K562 (cell line): ENCODE measurements at regions of chr14 and their contacts with region 1.

Region 1: GRCh38 chr14:94548999-94549985 is 11.9 kb upstream of the SERPINA4 start:
- DNase-seq: peak; percentile 41 to 65 (median 55)
- ATAC-seq: peak; percentile 88
- H3K4me3 ChIP-seq: no peak overlapping the region
- H3K27ac ChIP-seq: no peak overlapping the region
- H3K4me1 ChIP-seq: no peaks in the 10 kb centered on the region
- H3K27me3 ChIP-seq: no peaks in the 10 kb centered on the region
- CTCF ChIP-seq: peak; percentile 62 to 68 (median 65)
- EP300 ChIP-seq: no peak
- POLR2A ChIP-seq: no peak
- RAD21 ChIP-seq: peak in 1 of 2 experiments; percentile 48; a peak in 2 of 4 replicates

Region 2: GRCh38 chr14:94439453-94440057 is 109.7 kb before region 1 on chr14:
- CTCF ChIA-PET with region 1: interaction called, 5 read pairs
- POLR2A ChIA-PET with region 1: no interaction called
- in situ Hi-C with region 1: no loop called
- intact Hi-C with region 1: loop called (anchors 1 kb)
- DNase-seq: no peak
- ATAC-seq: no peak
- H3K4me3 ChIP-seq: no peak overlapping the region
- H3K27ac ChIP-seq: no peak overlapping the region
- H3K4me1 ChIP-seq: no peaks in the 10 kb centered on the region
- H3K27me3 ChIP-seq: no peaks in the 10 kb centered on the region
- CTCF ChIP-seq: no peak
- EP300 ChIP-seq: no peak
- POLR2A ChIP-seq: no peak
- RAD21 ChIP-seq: no peak